Caco-2 (cell line): ENCODE measurements at regions of chr2 and their contacts with region 1.

Region 1: DNA sequence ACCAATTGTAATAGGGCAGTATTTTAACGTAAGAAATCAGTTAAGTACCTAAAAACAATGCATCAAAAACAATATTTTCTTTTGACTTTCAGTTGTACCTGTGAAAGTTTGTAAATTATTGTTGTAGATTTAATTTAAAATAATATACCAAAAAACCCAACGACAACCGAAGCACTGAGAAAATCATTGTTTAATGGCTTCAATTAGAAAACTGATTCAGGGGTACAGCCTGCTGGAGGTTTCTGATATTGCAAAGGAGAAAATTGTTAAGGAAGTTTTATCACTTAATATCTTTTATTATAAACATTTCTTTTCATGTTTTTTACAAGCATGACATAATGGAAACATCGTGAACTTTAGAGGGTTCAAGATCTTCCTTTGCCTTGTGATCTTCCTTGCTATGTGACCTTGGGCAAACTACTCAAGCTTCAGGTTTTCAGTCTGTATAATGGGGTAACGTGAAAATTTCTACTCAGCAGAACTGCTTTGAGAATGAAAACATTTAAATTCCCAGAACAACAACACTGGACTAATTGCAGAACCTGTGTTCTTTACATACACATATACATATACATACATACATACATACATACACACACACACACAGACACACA is 76.3 kb upstream of the GLS start:
- DNase-seq: no peak
- H3K4me3 ChIP-seq: no peak overlapping the region
- H3K4me3 Mint-ChIP-seq: no peak overlapping the region
- H3K27ac Mint-ChIP-seq: peak overlapping the region; percentile 39
- H3K4me1 ChIP-seq: peaks cover 60% of the 10 kb centered on the region
- H3K4me1 Mint-ChIP-seq: peaks cover 57% of the 10 kb centered on the region
- H3K27me3 ChIP-seq: no peaks in the 10 kb centered on the region
- H3K27me3 Mint-ChIP-seq: no peaks in the 10 kb centered on the region
- CTCF ChIP-seq: peak; percentile 49 to 70

Region 2: GRCh38 chr2:190382851-190383250 is 421.4 kb before region 1 on chr2:
- CTCF ChIA-PET with region 1: no interaction called
- POLR2A ChIA-PET with region 1: no interaction called
- intact Hi-C with region 1: loop called (anchors 2 kb)
- DNase-seq: peak; percentile 48 to 61
- H3K4me3 ChIP-seq: no peak overlapping the region
- H3K4me3 Mint-ChIP-seq: no peak overlapping the region
- H3K27ac Mint-ChIP-seq: no peak overlapping the region
- H3K4me1 ChIP-seq: peaks cover 13% of the 10 kb centered on the region
- H3K4me1 Mint-ChIP-seq: peaks cover 7% of the 10 kb centered on the region
- H3K27me3 ChIP-seq: no peaks in the 10 kb centered on the region
- H3K27me3 Mint-ChIP-seq: no peaks in the 10 kb centered on the region
- CTCF ChIP-seq: peak; percentile 60 to 75

Region 3: DNA sequence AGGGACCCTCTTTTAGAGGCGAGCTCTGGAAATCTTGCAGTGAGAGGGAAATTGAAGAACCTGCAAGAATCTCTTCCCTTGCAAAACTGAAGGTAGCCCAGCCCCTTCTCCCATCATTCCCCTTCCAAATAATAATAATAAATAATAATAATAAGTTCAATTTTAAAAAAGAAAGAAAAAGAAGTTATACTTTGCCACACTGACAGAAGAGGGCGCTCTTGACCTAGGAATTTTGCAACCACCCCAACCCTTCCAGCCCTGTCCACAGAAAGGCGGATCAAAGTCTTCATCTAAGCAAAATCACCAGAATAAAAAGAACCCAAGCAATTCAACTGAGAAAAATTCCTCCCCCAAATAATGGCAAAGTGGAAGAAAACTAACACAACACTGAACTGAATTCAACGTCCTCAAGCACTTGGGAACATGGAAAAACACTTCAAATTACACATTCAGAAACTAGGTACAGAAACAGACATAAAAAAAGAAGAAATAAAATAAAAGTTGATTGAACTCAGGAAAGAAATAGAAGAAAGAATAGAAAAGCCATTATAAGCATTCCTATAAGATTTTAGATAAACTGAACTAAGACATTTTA is 22.6 kb before region 1 on chr2:
- CTCF ChIA-PET with region 1: interaction called, 4 read pairs
- POLR2A ChIA-PET with region 1: no interaction called
- intact Hi-C with region 1: loop called (anchors 1 kb)
- DNase-seq: peak; percentile 63 to 75
- H3K4me3 ChIP-seq: no peak overlapping the region
- H3K4me3 Mint-ChIP-seq: no peak overlapping the region
- H3K27ac Mint-ChIP-seq: peak overlapping the region; percentile 58
- H3K4me1 ChIP-seq: peaks cover 17% of the 10 kb centered on the region
- H3K4me1 Mint-ChIP-seq: peaks cover 40% of the 10 kb centered on the region
- H3K27me3 ChIP-seq: no peaks in the 10 kb centered on the region
- H3K27me3 Mint-ChIP-seq: no peaks in the 10 kb centered on the region
- CTCF ChIP-seq: peak; percentile 60 to 87

Region 4: GRCh38 chr2:190835303-190835930 is 31.1 kb after region 1 on chr2:
- CTCF ChIA-PET with region 1: no interaction called
- POLR2A ChIA-PET with region 1: no interaction called
- intact Hi-C with region 1: loop called (anchors 1 kb)
- DNase-seq: no peak
- H3K4me3 ChIP-seq: no peak overlapping the region
- H3K4me3 Mint-ChIP-seq: no peak overlapping the region
- H3K27ac Mint-ChIP-seq: no peak overlapping the region
- H3K4me1 ChIP-seq: peaks cover 5% of the 10 kb centered on the region
- H3K4me1 Mint-ChIP-seq: peaks cover 9% of the 10 kb centered on the region
- H3K27me3 ChIP-seq: no peaks in the 10 kb centered on the region
- H3K27me3 Mint-ChIP-seq: no peaks in the 10 kb centered on the region
- CTCF ChIP-seq: no peak

Region 5: DNA sequence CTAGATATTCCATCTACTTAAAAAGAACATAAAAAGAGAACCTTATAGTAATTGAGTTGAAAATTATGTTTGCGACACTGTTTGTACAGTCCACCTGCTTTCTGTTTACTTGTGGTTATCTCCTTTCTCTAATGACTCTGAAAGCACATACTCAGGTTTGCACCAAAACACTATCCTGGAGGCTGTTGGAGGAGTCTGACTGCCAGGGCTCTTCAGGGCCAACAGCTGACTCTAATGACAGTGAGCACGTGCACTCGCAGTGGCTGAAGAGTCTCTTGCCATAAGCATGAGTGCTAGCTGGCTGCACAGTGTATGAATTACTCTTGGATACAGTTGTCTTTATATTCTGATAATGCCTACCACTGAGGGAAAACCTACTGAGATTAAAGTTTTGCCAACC is 59.7 kb after region 1 on chr2:
- CTCF ChIA-PET with region 1: no interaction called
- POLR2A ChIA-PET with region 1: no interaction called
- intact Hi-C with region 1: loop called (anchors 1 kb)
- DNase-seq: peak; percentile 62 to 71
- H3K4me3 ChIP-seq: no peak overlapping the region
- H3K4me3 Mint-ChIP-seq: no peak overlapping the region
- H3K27ac Mint-ChIP-seq: no peak overlapping the region
- H3K4me1 ChIP-seq: peaks cover 25% of the 10 kb centered on the region
- H3K4me1 Mint-ChIP-seq: peaks cover 24% of the 10 kb centered on the region
- H3K27me3 ChIP-seq: no peaks in the 10 kb centered on the region
- H3K27me3 Mint-ChIP-seq: no peaks in the 10 kb centered on the region
- CTCF ChIP-seq: no peak

Region 6: DNA sequence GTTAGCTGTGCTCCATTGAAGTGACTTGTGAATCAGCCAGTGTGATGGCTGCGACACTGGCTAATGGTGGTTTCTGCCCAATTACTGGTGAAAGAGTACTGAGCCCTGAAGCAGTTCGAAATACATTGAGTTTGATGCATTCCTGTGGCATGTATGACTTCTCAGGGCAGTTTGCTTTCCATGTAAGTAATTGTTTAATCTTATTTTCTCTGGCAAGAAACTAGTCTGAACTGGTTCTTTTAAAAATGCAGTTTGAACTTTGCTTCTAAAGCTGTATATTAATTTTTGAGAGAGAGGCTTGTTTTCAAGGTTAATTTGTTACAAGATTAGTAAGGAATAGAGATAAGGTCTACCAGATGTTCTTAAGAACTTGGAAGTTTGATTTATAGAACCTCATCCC is 123.0 kb after region 1 on chr2:
- CTCF ChIA-PET with region 1: no interaction called
- POLR2A ChIA-PET with region 1: no interaction called
- intact Hi-C with region 1: loop called (anchors 1 kb)
- DNase-seq: peak; percentile 29 to 53
- H3K4me3 ChIP-seq: no peak overlapping the region
- H3K4me3 Mint-ChIP-seq: no peak overlapping the region
- H3K27ac Mint-ChIP-seq: no peak overlapping the region
- H3K4me1 ChIP-seq: peaks cover 33% of the 10 kb centered on the region
- H3K4me1 Mint-ChIP-seq: peaks cover 12% of the 10 kb centered on the region
- H3K27me3 ChIP-seq: no peaks in the 10 kb centered on the region
- H3K27me3 Mint-ChIP-seq: no peaks in the 10 kb centered on the region
- CTCF ChIP-seq: no peak

Region 7: GRCh38 chr2:191030521-191031154 is 226.3 kb after region 1 on chr2:
- CTCF ChIA-PET with region 1: no interaction called
- POLR2A ChIA-PET with region 1: no interaction called
- intact Hi-C with region 1: loop called (anchors 1 kb)
- DNase-seq: peak; percentile 56 to 64
- H3K4me3 ChIP-seq: no peak overlapping the region
- H3K4me3 Mint-ChIP-seq: peak overlapping the region; percentile 43
- H3K27ac Mint-ChIP-seq: peak overlapping the region; percentile 34
- H3K4me1 ChIP-seq: peaks cover 43% of the 10 kb centered on the region
- H3K4me1 Mint-ChIP-seq: peaks cover 45% of the 10 kb centered on the region
- H3K27me3 ChIP-seq: no peaks in the 10 kb centered on the region
- H3K27me3 Mint-ChIP-seq: no peaks in the 10 kb centered on the region
- CTCF ChIP-seq: peak; percentile 63 to 75